ENCODE measurements at regions of chr10 and their contacts with region 1.

Region 1: DNA sequence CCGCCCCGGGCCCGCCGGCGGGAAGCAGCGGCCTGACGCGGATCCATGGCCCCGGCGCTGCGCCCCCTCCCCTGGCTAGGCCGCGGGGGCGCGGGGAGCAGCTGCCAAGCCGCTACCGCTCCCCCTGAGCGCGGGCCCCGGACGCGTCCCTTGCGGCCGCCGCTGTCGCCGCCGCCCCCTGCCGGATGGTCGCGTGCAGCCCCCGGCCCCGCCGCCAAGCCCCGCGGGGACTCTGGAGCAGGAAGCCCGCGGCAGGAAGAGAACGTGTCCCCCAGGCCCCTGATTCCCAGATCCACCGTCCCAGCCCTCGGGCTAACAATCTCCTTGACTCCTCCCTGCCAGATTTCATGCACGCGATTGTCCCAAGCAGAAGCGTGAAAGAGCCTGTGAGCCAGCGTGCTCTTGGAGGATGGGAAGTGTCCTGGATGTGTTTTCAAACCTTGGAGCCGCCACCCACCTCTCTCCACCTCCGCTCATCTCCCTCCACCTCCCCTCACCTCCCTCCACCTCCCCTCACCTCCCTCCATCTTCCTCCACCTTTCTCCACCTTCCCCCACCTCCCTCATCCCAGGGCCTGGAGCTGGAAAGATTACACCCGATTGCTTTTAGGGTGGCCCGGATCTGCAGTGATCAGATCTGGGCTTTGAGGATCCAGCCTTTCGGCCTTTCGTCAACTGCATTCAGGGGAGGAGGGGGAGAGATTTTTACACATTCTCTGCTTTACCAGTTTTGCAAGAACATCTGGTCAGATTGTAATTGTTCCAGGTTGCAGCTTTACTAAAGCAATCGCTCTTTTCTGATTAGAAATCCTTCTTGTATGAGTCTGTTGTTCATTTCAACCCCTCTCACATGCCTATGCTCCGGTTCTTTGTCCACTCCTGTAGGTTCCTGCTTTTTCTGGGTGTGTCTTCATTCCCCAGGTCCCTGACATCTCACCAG is 570 bp upstream of the PRTFDC1 start:
- DNase-seq: no peak
- ATAC-seq: peak; percentile 72
- H3K4me3 ChIP-seq: peak overlapping the region; percentile 66; the same call in 1 of the 2 replicates
- H3K27ac ChIP-seq: no peak overlapping the region
- H3K4me1 ChIP-seq: peaks cover under 1% of the 10 kb centered on the region; the same call in 1 of the 2 replicates
- H3K27me3 ChIP-seq: no peaks in the 10 kb centered on the region
- CTCF ChIP-seq: peak; percentile 20 to 53 (median 24); a peak in 4 of 6 replicates
- EP300 ChIP-seq: no peak
- POLR2A ChIP-seq: peak; percentile 51
- RAD21 ChIP-seq: peak; percentile 49

Region 2: DNA sequence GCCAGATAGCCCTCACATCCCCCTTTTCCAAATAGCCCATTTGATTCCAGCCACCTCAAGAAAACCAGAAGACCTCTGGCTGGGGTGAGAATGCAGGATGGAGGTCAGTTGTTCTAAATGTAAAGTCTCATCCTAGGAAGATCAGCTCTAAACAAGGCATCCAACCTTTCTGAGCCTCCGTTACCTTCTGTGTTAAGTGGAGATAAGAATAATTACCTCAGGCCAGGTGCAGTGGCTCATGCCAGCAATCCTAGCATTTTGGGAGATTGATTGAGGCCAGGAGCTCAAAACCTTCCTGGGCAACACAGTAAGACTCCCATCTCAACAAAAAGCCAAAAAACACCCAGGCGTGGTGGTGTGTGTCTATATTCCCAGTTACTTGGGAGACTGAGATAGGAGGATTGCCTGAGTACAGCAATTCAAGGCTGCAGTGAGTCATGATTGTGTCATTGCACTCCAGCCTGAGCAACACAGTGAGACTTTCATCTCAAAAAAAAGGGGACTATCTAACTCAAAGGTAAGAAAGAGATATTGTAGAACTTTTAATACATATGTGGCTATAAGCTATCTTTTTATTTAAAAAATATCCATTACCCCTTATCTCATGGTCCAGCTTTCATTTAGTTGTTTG is 44.1 kb before region 1 on chr10:
- CTCF ChIA-PET with region 1: interaction called, 5 read pairs
- POLR2A ChIA-PET with region 1: interaction called, 4 read pairs
- RAD21 ChIA-PET with region 1: interaction called, 45 read pairs
- SMC1A ChIA-PET with region 1: interaction called, 28 read pairs
- in situ Hi-C with region 1: no loop called
- intact Hi-C with region 1: no loop called
- DNase-seq: no peak
- ATAC-seq: peak; percentile 65
- H3K4me3 ChIP-seq: no peak overlapping the region
- H3K27ac ChIP-seq: no peak overlapping the region
- H3K4me1 ChIP-seq: no peaks in the 10 kb centered on the region
- H3K27me3 ChIP-seq: no peaks in the 10 kb centered on the region
- CTCF ChIP-seq: no peak
- EP300 ChIP-seq: no peak
- POLR2A ChIP-seq: no peak
- RAD21 ChIP-seq: no peak

Region 3: DNA sequence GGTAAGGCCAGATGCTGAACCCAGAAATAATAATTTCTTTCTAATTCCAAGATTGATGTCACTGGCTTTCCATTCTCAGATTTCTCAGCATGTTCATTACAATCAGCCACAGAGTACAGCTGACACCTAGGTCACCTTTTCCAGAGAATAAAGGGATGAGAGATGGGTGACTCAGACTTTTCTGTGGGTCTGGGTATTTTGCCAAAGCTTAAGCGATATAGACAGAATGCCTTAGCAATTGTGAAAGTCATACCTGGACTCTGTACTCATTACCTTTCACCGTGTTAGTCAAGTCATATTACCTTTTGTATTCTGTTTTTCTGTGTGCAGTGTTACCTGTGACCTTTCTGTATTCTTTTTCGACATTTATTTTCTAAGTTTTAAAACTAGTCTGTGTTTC is 10.0 kb after region 1 on chr10:
- CTCF ChIA-PET with region 1: interaction called, 3 read pairs
- POLR2A ChIA-PET with region 1: interaction called, 4 read pairs
- RAD21 ChIA-PET with region 1: interaction called, 15 read pairs
- SMC1A ChIA-PET with region 1: interaction called, 7 read pairs
- in situ Hi-C with region 1: no loop called
- intact Hi-C with region 1: no loop called
- DNase-seq: no peak
- ATAC-seq: no peak; the same call in 2 of the 3 replicates
- H3K4me3 ChIP-seq: no peak overlapping the region
- H3K27ac ChIP-seq: no peak overlapping the region
- H3K4me1 ChIP-seq: no peaks in the 10 kb centered on the region
- H3K27me3 ChIP-seq: no peaks in the 10 kb centered on the region; a peak in 1 of 4 replicates
- CTCF ChIP-seq: no peak
- EP300 ChIP-seq: no peak
- POLR2A ChIP-seq: no peak
- RAD21 ChIP-seq: no peak